ENCODE measurements at regions of chr16 and their contacts with region 1.

Region 1: GRCh38 chr16:51538707-51539498 is 387.8 kb upstream of the SALL1 start:
- DNase-seq: peak; percentile 58
- H3K4me3 ChIP-seq: peak overlapping the region in 1 of 3 experiments; percentile 18
- H3K27ac ChIP-seq: peak overlapping the region; percentile 69
- H3K4me1 ChIP-seq: peaks cover 21% of the 10 kb centered on the region
- H3K27me3 ChIP-seq: no peaks in the 10 kb centered on the region
- CTCF ChIP-seq: no peak
- POLR2A ChIP-seq: no peak

Region 2: DNA sequence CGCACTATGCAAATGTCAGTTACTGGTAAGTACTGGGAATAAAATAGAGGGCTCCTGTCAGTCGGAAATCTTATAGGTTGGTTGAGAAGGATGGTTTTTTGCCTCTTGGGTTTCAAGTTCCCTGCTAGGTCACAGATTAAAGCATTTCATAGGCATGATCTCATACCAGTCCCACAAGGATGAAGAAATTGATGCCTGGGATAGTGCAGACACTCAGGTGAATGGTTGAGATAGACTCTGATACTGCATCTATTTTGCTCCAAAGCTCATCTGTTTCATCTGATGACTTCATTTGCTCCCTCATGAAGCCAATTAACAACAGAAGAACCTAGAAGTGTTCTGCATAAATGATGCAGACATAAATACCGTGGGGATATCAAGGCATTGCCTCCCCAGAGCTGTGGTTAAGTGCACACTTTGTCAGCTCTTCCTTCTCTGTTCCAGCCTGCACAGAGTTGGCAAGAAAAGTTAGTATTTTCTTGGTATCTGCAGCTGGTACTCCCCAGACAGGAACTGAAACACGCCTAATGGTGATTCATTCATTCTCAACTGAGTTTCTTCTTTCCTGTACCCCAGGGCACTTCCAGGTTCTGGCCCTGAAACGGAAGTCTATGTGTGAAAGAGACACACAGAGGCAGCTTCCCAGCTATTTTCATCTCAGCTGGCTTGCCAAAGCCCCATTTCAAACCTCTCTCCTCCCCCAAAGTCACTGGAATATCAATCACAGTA is 30.5 kb after region 1 on chr16:
- CTCF ChIA-PET with region 1: no interaction called
- POLR2A ChIA-PET with region 1: no interaction called
- dilution Hi-C with region 1: no loop called
- intact Hi-C with region 1: loop called (anchors 1 kb)
- DNase-seq: peak; percentile 60
- H3K4me3 ChIP-seq: no peak overlapping the region
- H3K27ac ChIP-seq: peak overlapping the region; percentile 57
- H3K4me1 ChIP-seq: peaks cover 17% of the 10 kb centered on the region
- H3K27me3 ChIP-seq: no peaks in the 10 kb centered on the region
- CTCF ChIP-seq: no peak
- POLR2A ChIP-seq: no peak

Region 3: GRCh38 chr16:51818342-51818944 is 279.5 kb after region 1 on chr16:
- CTCF ChIA-PET with region 1: no interaction called
- POLR2A ChIA-PET with region 1: no interaction called
- dilution Hi-C with region 1: no loop called
- intact Hi-C with region 1: no loop called
- DNase-seq: no peak
- H3K4me3 ChIP-seq: no peak overlapping the region
- H3K27ac ChIP-seq: no peak overlapping the region
- H3K4me1 ChIP-seq: no peaks in the 10 kb centered on the region
- H3K27me3 ChIP-seq: no peaks in the 10 kb centered on the region
- CTCF ChIP-seq: no peak
- POLR2A ChIP-seq: no peak

Measured in endothelial cell of umbilical vein (primary cell).